Heart left ventricle (tissue), 16 donors: ENCODE measurements at regions of chr18 and their contacts with region 1.

Region 1: DNA sequence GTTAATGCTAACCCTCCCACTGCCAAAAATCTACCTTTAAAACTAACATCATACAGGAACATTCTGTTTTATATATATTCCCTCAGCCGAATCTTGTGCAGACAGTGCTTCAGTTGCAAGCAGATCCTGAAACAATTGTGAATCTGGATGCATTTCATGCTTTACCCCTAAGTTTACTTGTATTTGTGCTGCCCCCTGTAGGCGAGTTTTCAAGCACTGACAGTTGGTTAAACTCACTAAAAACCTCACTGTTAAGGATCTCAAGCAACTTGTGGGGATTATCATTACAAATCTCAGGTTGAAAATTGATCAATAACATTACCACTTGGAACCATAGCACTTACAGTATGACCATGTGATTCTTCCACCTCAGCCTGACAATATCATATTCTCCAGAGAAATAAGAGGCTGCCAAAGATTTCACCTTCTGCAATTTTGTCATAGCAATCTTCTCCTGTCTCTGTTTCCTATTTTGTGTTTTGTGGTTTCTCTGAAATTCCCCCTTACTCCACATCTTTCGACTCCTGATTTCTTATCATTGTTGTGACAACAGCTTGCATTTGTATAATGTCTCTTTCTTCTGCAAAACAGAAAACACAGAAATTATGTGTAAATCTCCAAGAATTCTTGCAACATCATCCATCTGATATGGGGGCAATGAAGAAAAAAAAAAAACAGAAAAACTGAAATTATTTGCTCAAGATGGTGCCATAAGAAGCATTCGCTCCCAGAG is 354.6 kb upstream of the SETBP1 start:
- DNase-seq: peak in 4 of 5 donors; percentile 25 to 54 (median 34)
- ATAC-seq: no peak
- H3K4me3 ChIP-seq: no peak overlapping the region
- H3K27ac ChIP-seq: no peak overlapping the region
- H3K4me1 ChIP-seq: no peaks in the 10 kb centered on the region
- H3K27me3 ChIP-seq: no peaks in the 10 kb centered on the region
- CTCF ChIP-seq: peak; percentile 27 to 59 (median 42)
- POLR2A ChIP-seq: no peak

Region 2: DNA sequence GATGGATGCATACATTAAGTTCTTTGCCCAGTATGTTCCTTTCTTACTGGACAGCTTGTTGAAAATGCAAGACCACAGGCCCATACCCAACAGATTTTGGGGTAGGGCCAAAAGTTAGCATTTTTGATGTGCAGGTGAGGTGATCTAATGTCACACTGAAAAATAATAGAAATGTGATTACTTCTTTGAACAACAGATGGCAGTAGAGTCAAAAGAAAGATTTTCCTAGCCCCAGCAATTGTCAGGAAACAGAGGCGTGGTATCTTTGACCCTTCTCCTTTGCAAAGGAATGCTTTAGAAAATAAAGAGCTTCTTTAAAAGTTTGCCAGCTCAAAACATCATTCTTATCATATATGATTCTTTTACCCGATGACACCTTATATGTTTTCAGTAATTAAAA is 705.1 kb before region 1 on chr18:
- intact Hi-C with region 1: loop called in 2 of 10 experiments (anchors 2 to 10 kb)
- DNase-seq: no peak
- ATAC-seq: peak in 2 of 4 donors; percentile 46 to 57
- H3K4me3 ChIP-seq: no peak overlapping the region
- H3K27ac ChIP-seq: no peak overlapping the region
- H3K4me1 ChIP-seq: no peaks in the 10 kb centered on the region
- H3K27me3 ChIP-seq: no peaks in the 10 kb centered on the region
- CTCF ChIP-seq: peak; percentile 41 to 71 (median 54)
- POLR2A ChIP-seq: no peak

Region 3: DNA sequence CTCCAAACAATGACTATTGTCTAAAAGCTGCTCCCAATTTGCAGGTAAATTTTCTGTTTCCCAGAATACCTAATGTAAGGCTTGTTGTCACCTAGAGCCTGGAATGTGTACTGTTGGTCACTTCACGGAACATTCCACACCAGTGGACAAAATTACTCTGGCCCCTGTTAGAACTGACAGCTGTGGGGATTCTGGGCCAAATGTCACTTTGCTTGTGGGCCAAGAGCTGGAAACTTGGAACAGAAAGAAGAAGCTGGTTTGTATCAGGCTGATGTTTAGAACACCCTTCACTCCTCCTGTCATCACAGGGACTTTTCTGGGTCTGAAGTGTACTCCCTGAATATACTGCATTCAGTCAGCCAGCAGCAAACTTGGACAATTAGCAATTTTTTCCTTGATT is 553.2 kb before region 1 on chr18:
- intact Hi-C with region 1: loop called in 1 of 10 experiments (anchors 10 kb)
- DNase-seq: peak; percentile 38 to 77 (median 67)
- ATAC-seq: peak; percentile 96 to 99 (median 98)
- H3K4me3 ChIP-seq: no peak overlapping the region
- H3K27ac ChIP-seq: peak overlapping the region in 4 of 12 donors; percentile 3 to 43 (median 16)
- H3K4me1 ChIP-seq: peaks cover 0 to 15% (median 8%) of the 10 kb centered on the region in 12 donors
- H3K27me3 ChIP-seq: no peaks in the 10 kb centered on the region
- CTCF ChIP-seq: peak in 6 of 12 donors; percentile 18 to 44 (median 24)
- POLR2A ChIP-seq: no peak

Region 4: DNA sequence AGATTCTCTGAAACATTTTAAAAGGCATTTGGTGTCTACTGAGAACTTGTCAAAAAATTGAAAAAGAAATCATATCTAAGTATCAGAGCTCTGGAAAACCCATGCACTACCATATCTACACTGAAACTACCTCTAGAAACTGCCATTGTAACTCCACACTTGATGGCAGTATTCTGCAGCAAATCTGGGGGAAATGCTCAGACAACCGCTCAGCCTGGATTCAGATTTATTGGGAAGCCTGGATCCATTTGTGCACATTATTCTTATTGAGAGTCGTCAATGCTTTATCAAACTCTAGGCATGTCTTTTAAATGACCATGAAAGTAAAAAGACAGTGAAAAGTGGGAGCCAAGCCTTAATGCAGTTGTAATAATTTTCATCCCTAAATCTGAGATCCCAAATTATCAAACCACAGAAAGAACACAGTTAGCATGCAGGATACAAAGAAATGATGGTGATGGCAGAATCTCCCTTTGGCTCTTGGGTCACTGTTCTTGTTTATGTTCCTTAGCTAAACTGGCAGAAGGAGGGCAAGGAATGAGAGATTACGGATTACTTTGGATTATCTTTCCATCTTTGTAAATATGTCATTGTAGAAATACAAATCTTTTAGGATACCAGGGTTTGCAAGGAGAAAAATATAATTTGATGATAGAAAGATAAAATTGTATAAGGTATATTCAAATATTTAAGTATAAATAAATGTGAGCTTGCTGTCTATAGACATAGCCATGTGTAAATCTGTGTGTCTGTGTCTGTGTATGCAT is 536.7 kb before region 1 on chr18:
- intact Hi-C with region 1: loop called in 2 of 10 experiments (anchors 10 kb)
- DNase-seq: no peak
- ATAC-seq: peak in 2 of 4 donors; percentile 44 to 64
- H3K4me3 ChIP-seq: no peak overlapping the region
- H3K27ac ChIP-seq: no peak overlapping the region
- H3K4me1 ChIP-seq: peaks cover 0 to 3% (median 0%) of the 10 kb centered on the region in 12 donors
- H3K27me3 ChIP-seq: no peaks in the 10 kb centered on the region
- CTCF ChIP-seq: peak in 9 of 12 donors; percentile 10 to 64 (median 44)
- POLR2A ChIP-seq: no peak

Region 5: GRCh38 chr18:44123743-44124142 is 202.3 kb before region 1 on chr18:
- intact Hi-C with region 1: loop called in 1 of 10 experiments (anchors 10 kb)
- DNase-seq: no peak
- ATAC-seq: no peak
- H3K4me3 ChIP-seq: no peak overlapping the region
- H3K27ac ChIP-seq: no peak overlapping the region
- H3K4me1 ChIP-seq: no peaks in the 10 kb centered on the region
- H3K27me3 ChIP-seq: no peaks in the 10 kb centered on the region
- CTCF ChIP-seq: no peak
- POLR2A ChIP-seq: no peak

Region 6: GRCh38 chr18:44130376-44130942 is 195.6 kb before region 1 on chr18:
- intact Hi-C with region 1: loop called in 5 of 10 experiments (anchors 2 to 10 kb)
- DNase-seq: no peak
- ATAC-seq: peak in 1 of 4 donors; percentile 51
- H3K4me3 ChIP-seq: no peak overlapping the region
- H3K27ac ChIP-seq: no peak overlapping the region
- H3K4me1 ChIP-seq: no peaks in the 10 kb centered on the region
- H3K27me3 ChIP-seq: no peaks in the 10 kb centered on the region
- CTCF ChIP-seq: peak; percentile 38 to 77 (median 60)
- POLR2A ChIP-seq: no peak

Region 7: DNA sequence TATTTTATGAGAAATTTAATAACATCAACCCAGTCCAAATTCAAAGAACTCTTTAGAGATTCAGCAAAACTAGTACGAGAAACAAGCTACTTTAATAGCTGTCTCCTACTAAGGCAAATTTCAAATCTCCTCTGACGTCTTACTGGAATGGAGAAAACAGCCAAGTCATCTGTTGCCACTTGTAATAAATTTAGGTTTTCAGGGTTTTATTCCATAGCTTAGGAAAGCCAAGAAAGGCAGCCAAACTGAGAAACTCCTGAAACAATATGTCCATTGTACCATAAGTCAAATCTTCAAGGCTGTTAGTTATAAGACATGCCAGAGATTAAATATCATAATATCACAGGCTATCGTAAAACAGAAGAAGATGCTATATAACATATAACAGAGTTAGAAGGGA is 169.9 kb before region 1 on chr18:
- intact Hi-C with region 1: no loop called
- DNase-seq: no peak
- ATAC-seq: no peak
- H3K4me3 ChIP-seq: no peak overlapping the region
- H3K27ac ChIP-seq: no peak overlapping the region
- H3K4me1 ChIP-seq: no peaks in the 10 kb centered on the region
- H3K27me3 ChIP-seq: no peaks in the 10 kb centered on the region
- CTCF ChIP-seq: no peak
- POLR2A ChIP-seq: no peak

Region 8: DNA sequence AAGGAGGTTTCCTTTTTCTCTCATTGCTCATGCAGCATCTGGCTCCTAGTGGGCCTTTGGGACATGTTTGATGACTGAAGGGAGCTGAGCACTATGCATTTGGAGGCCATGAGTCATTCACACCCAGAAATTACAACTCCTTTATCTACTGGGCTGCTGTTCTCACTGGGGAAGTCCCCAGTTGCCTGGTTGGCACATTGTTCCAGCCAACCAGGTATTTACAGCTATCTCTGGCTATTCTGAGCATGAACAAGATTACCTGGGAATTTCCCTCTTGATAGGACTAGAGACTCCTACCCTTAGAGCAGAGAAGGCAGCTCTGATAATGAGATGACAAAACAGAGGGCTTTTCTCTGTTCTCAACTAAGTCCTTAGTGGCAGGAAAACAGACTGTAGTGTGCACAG is 561.2 kb after region 1 on chr18:
- intact Hi-C with region 1: loop called in 1 of 10 experiments (anchors 10 kb)
- DNase-seq: peak in 2 of 5 donors; percentile 34 to 41
- ATAC-seq: peak; percentile 92 to 96 (median 94)
- H3K4me3 ChIP-seq: no peak overlapping the region
- H3K27ac ChIP-seq: peak overlapping the region in 1 of 12 donors; percentile 11
- H3K4me1 ChIP-seq: peaks cover 0 to 44% (median 15%) of the 10 kb centered on the region in 12 donors
- H3K27me3 ChIP-seq: peaks cover 0 to 3% (median 0%) of the 10 kb centered on the region in 9 donors
- CTCF ChIP-seq: peak in 2 of 12 donors; percentile 7 to 12
- POLR2A ChIP-seq: no peak